ENCODE measurements at regions of chr16 and their contacts with region 1.

Region 1: DNA sequence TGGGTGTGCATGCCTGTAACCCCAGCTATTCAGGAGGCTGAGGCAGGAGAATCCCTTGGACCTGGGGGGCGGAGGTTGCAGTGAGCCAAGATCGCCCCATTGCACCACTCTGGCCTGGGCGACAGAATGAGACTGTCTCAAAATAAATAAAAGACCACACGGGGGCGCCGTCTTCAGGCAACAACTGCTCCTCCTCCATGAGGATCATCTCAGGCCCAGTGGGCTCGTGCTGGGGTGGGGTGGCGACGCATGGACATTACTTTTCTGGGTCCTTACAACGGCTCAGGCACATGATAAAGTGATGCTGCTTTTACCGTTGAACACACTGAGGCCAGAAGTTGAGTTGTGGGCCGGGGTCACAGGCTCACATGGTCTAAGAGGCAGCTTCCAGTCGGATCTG is 56.2 kb downstream of the PRMT7 start:
- DNase-seq: peak; percentile 58
- H3K4me3 ChIP-seq: no peak overlapping the region
- H3K27ac ChIP-seq: no peak overlapping the region
- H3K4me1 ChIP-seq: peaks cover 9% of the 10 kb centered on the region
- H3K27me3 ChIP-seq: no peaks in the 10 kb centered on the region
- CTCF ChIP-seq: peak; percentile 66

Region 2: GRCh38 chr16:68417711-68418301 is 50.8 kb after region 1 on chr16:
- CTCF ChIA-PET with region 1: no interaction called
- POLR2A ChIA-PET with region 1: interaction called, 11 read pairs
- intact Hi-C with region 1: no loop called
- DNase-seq: peak; percentile 23
- H3K4me3 ChIP-seq: no peak overlapping the region
- H3K27ac ChIP-seq: no peak overlapping the region
- H3K4me1 ChIP-seq: no peaks in the 10 kb centered on the region
- H3K27me3 ChIP-seq: no peaks in the 10 kb centered on the region
- CTCF ChIP-seq: no peak